ENCODE measurements at regions of chr2 and their contacts with region 1.

Region 1: DNA sequence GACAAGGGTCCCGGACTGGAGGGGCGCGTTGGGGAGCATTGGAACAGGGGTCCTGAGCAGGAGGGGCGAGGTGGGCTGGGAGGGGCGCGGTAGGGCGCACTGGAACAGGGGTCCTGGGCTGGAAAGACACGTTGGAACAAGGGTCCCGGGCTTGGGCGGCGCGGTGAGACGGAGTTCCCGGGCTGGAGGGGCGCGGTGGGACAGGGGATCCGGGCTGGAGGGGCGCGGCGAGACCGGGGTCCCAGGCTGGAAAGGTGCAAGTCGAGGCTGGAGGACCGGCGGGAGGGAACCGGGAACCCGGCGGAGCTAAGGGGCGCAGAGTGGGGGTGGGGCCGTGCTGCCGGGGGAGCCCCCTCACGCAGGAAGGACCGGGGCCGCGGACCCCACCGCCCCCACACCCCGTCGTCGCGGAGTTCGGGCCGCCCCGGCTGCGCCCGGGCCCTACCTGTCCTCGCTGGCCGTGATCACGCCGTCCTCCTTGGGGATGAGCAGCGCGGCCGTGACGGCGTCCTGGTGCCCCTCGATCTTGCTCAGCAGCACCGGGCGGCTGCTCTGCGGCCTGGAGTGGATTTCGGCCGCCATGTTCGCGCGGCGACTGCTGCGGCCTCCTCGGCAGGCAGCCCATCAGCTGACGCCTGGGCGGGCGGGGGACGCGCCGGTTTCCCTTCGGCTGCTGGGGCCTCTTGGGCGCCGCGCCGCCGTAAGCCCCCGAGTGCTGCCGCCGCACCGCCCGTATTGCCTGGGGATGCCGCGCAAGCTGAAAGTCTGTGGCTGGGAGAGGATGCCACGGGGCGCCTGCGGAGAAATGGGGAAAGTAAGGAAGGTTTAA is at the start of gene WDFY1:
- DNase-seq: peak; percentile 82
- H3K4me3 Mint-ChIP-seq: peak within 1 kb of the TSS; percentile 92
- H3K27ac Mint-ChIP-seq: peak within 1 kb of the TSS; percentile 86
- H3K4me1 Mint-ChIP-seq: peaks cover 58% of the 10 kb centered on the region
- H3K27me3 Mint-ChIP-seq: no peaks in the 10 kb centered on the region
- total RNA-seq, gene WDFY1: 39.4 to 39.9 TPM

Region 2: DNA sequence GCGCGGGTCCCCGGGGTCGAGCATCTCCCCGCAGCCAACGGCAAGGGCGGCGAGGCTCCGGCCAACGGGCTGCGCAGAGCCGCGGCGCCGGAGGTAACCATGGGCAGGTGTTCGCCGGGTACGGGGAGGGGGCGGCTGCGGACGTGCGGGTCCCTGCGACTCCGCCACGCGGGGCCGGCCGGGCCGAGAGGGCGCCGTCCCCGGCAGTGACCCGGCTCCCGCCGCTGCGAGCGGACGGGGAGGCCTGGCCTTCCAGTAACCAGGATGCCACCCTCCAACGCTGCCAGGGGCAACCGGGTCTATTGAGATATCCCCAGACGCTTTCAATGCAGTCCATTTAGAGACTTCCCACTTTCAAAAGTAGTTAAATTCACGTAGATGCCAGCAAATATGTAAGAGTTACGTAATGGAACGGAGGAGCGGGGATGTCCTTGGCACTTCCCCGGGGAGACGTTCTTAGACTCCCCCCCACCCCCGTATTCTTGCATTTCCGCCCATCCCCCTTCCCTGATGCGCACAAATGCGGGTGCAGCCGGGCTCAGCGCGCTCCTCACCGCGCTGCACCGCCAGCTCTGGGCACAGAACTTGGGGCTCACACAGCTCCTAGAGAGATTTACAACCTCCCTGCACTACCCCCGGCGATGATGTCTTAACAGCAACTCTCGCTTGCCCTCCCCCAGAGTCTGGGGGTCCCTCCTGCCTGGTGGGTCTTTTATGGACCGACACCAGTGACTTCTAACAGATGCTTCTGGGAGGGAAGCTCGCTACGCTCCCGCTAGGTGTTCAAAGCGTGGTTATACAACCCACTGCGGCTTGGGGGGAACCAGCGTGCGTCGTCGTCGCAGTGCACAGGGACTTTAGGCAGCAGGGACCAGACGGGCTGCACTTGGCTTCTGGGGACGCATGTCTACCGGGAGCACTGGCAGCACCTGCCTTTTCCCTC is 1519.9 kb before region 1 on chr2:
- CTCF ChIA-PET with region 1: no interaction called
- intact Hi-C with region 1: loop called (anchors 10 kb)
- DNase-seq: peak; percentile 67
- H3K4me3 Mint-ChIP-seq: peak overlapping the region; percentile 83
- H3K27ac Mint-ChIP-seq: peak overlapping the region; percentile 88
- H3K4me1 Mint-ChIP-seq: peaks cover 42% of the 10 kb centered on the region
- H3K27me3 Mint-ChIP-seq: peaks cover 56% of the 10 kb centered on the region

Region 3: DNA sequence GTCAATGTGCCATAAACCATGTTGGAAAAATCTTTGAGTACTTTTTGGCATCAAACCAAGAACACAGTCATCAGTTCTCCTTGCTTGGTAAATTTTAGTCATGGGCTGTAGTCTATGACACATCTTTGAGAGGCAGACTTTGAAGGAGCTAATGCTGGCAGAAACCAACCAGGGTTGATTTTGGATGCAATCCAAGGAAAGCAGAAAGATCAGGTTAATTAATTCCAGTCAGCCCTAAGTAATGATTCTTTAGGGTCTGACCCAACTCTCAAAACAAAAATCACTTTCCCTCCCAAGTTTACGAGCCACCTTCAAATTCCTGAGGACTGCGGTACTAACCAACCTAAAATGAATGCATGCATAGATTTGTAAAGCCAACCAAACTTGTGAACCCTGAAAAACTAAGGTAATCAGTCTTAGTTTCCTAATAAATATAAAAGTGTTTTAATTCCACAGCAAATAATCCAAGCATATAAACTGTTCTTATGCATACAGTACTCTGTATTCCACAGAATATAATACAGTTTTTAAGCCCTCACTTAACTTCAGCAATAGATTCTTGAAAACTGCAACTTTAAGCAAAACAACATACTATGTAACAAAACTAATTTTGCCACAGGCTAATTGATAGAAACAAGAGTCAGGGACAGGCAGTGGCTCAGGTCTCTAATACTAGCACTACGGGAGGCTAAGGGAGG is 129.6 kb before region 1 on chr2:
- CTCF ChIA-PET with region 1: interaction called, 3 read pairs
- intact Hi-C with region 1: loop called (anchors 1 kb)
- DNase-seq: peak; percentile 9
- H3K4me3 Mint-ChIP-seq: no peak overlapping the region
- H3K27ac Mint-ChIP-seq: no peak overlapping the region
- H3K4me1 Mint-ChIP-seq: peaks cover 18% of the 10 kb centered on the region
- H3K27me3 Mint-ChIP-seq: no peaks in the 10 kb centered on the region

Region 4: DNA sequence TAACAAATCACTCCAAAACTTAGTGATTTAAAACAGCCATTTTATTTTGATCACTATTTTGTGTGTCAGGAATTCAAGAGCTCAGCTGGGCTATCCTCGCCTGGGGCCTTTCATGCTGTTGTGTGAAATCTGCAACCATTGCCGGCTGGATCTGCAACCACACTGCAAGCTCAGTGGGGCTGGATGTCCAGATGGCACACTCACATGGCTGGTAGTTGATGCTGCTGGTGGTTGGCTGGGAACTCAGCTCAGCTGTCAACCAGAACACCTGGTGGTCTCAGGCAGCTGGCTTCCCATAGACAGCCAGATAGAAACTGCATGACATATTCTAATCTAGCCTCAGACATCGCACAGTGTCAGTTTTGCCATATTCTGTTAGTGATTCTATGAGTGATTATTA is 76.9 kb before region 1 on chr2:
- CTCF ChIA-PET with region 1: no interaction called
- intact Hi-C with region 1: no loop called
- DNase-seq: no peak
- H3K4me3 Mint-ChIP-seq: no peak overlapping the region
- H3K27ac Mint-ChIP-seq: no peak overlapping the region
- H3K4me1 Mint-ChIP-seq: peaks cover 21% of the 10 kb centered on the region
- H3K27me3 Mint-ChIP-seq: no peaks in the 10 kb centered on the region

Region 5: DNA sequence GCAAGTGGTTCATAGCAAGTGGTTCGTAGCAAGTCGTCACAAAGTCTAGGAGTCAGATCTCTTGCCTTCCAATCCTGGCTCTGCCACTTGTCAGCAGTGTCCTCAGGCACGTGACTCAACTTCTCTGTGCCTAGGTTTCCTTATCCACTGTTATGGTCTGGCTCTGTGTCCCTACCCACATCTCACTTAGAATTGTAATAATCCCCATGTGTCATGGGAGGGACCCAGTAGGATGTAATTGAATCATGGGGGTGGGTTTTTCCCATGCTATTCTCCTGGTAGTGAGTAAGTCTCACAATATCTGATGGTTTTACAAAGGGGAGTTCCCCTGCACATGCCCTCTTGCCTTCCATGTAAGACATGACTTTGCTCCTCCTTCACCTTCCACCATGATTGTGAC is 55.7 kb before region 1 on chr2:
- CTCF ChIA-PET with region 1: no interaction called
- intact Hi-C with region 1: loop called (anchors 2 kb)
- DNase-seq: peak; percentile 21
- H3K4me3 Mint-ChIP-seq: no peak overlapping the region
- H3K27ac Mint-ChIP-seq: no peak overlapping the region
- H3K4me1 Mint-ChIP-seq: peaks cover 5% of the 10 kb centered on the region
- H3K27me3 Mint-ChIP-seq: no peaks in the 10 kb centered on the region

Region 6: GRCh38 chr2:224025874-224026273 is 81.0 kb after region 1 on chr2:
- CTCF ChIA-PET with region 1: interaction called, 3 read pairs
- intact Hi-C with region 1: loop called (anchors 1 kb)
- DNase-seq: peak; percentile 84
- H3K4me3 Mint-ChIP-seq: peak overlapping the region; percentile 64
- H3K27ac Mint-ChIP-seq: peak overlapping the region; percentile 95
- H3K4me1 Mint-ChIP-seq: peaks cover 84% of the 10 kb centered on the region
- H3K27me3 Mint-ChIP-seq: no peaks in the 10 kb centered on the region

Region 7: GRCh38 chr2:224946895-224947294 is 1002.0 kb after region 1 on chr2:
- CTCF ChIA-PET with region 1: no interaction called
- intact Hi-C with region 1: loop called (anchors 5 kb)
- DNase-seq: no peak
- H3K4me3 Mint-ChIP-seq: peak overlapping the region; percentile 82
- H3K27ac Mint-ChIP-seq: peak overlapping the region; percentile 94
- H3K4me1 Mint-ChIP-seq: peaks cover 58% of the 10 kb centered on the region
- H3K27me3 Mint-ChIP-seq: no peaks in the 10 kb centered on the region

Region 8: GRCh38 chr2:225076125-225076524 is 1131.2 kb after region 1 on chr2:
- CTCF ChIA-PET with region 1: no interaction called
- intact Hi-C with region 1: no loop called
- DNase-seq: no peak
- H3K4me3 Mint-ChIP-seq: no peak overlapping the region
- H3K27ac Mint-ChIP-seq: no peak overlapping the region
- H3K4me1 Mint-ChIP-seq: peaks cover 9% of the 10 kb centered on the region
- H3K27me3 Mint-ChIP-seq: no peaks in the 10 kb centered on the region